CD8-positive, alpha-beta T cell (primary cell): ENCODE measurements at regions of chr19 and their contacts with region 1.

Region 1: GRCh38 chr19:43743022-43743421 is 11.7 kb downstream of the SMG9 start:
- DNase-seq: no peak
- ATAC-seq: no peak
- H3K4me3 ChIP-seq: no peak overlapping the region
- H3K4me3 Mint-ChIP-seq: no peak overlapping the region
- H3K27ac ChIP-seq: no peak overlapping the region
- H3K27ac Mint-ChIP-seq: no peak overlapping the region
- H3K4me1 ChIP-seq: no peaks in the 10 kb centered on the region
- H3K4me1 Mint-ChIP-seq: peaks cover 8% of the 10 kb centered on the region
- H3K27me3 ChIP-seq: no peaks in the 10 kb centered on the region
- H3K27me3 Mint-ChIP-seq: no peaks in the 10 kb centered on the region
- CTCF ChIP-seq: no peak

Region 2: GRCh38 chr19:43731846-43732245 is 11.2 kb before region 1 on chr19:
- CTCF ChIA-PET with region 1: interaction called, 10 read pairs
- POLR2A ChIA-PET with region 1: no interaction called
- intact Hi-C with region 1: no loop called
- DNase-seq: no peak
- ATAC-seq: no peak
- H3K4me3 ChIP-seq: no peak overlapping the region
- H3K4me3 Mint-ChIP-seq: no peak overlapping the region
- H3K27ac ChIP-seq: no peak overlapping the region
- H3K27ac Mint-ChIP-seq: no peak overlapping the region
- H3K4me1 ChIP-seq: no peaks in the 10 kb centered on the region
- H3K4me1 Mint-ChIP-seq: peaks cover 2% of the 10 kb centered on the region
- H3K27me3 ChIP-seq: no peaks in the 10 kb centered on the region
- H3K27me3 Mint-ChIP-seq: no peaks in the 10 kb centered on the region
- CTCF ChIP-seq: no peak

Region 3: GRCh38 chr19:43765109-43765876 is 22.3 kb after region 1 on chr19:
- CTCF ChIA-PET with region 1: interaction called, 9 read pairs
- POLR2A ChIA-PET with region 1: no interaction called
- intact Hi-C with region 1: loop called in 1 of 2 experiments (anchors 1 kb)
- DNase-seq: peak in 8 of 9 experiments; percentile 51 to 85 (median 72)
- ATAC-seq: peak; percentile 84
- H3K4me3 ChIP-seq: no peak overlapping the region
- H3K4me3 Mint-ChIP-seq: peak overlapping the region; percentile 58
- H3K27ac ChIP-seq: peak overlapping the region; percentile 24 to 77
- H3K27ac Mint-ChIP-seq: peak overlapping the region; percentile 90
- H3K4me1 ChIP-seq: peaks cover 30% of the 10 kb centered on the region
- H3K4me1 Mint-ChIP-seq: peaks cover 31% of the 10 kb centered on the region
- H3K27me3 ChIP-seq: no peaks in the 10 kb centered on the region
- H3K27me3 Mint-ChIP-seq: no peaks in the 10 kb centered on the region
- CTCF ChIP-seq: no peak

Region 4: DNA sequence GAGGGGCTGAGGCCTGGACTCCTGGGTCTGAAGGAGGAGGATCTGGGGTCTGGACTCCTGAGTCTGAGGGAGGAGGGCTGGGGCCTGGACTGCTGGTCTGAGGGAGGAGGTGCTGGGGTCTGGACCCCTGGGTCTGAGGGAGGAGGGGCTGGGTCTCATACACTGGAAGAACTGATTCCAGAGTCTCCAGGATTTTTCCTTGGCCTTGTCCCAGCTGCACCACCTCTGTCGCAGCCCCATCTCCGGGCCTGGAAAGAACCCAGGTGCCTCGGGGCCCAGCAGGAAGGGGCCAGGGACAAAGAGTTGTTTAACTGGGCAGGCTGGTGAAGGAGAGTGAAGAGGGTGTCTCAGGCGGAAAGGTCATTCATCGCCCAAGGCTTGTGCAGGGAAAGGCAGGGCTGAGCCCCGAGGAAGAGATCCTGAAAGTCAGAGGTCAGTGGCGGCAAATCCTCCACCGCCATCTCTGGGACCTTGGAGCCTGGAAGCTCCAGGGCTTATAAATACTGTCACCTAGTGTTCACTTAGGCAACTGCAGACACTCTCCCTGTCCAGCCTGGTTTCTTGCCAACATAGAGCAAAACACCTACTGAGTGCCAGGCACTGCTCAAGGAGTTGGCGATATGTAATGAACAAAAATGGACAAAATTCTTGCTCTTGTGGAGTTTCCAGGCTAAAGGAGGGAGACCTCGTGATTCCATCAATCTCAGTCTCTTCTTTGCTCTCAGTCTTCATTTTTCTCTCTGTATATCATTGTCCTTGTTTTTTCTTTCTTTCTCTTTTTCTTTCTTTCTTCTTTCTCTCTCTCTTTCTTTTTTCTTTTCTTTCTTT is 42.2 kb after region 1 on chr19:
- CTCF ChIA-PET with region 1: interaction called, 84 read pairs
- POLR2A ChIA-PET with region 1: interaction called, 5 read pairs
- intact Hi-C with region 1: loop called (anchors 1 kb)
- DNase-seq: peak in 8 of 9 experiments; percentile 27 to 82 (median 52)
- ATAC-seq: peak; percentile 38
- H3K4me3 ChIP-seq: no peak overlapping the region
- H3K4me3 Mint-ChIP-seq: peak overlapping the region; percentile 56
- H3K27ac ChIP-seq: peak overlapping the region; percentile 25 to 54
- H3K27ac Mint-ChIP-seq: peak overlapping the region; percentile 96
- H3K4me1 ChIP-seq: peaks cover 36% of the 10 kb centered on the region
- H3K4me1 Mint-ChIP-seq: peaks cover 40% of the 10 kb centered on the region
- H3K27me3 ChIP-seq: peaks cover 0 to 4% of the 10 kb centered on the region in 2 experiments
- H3K27me3 Mint-ChIP-seq: peaks cover 9% of the 10 kb centered on the region
- CTCF ChIP-seq: peak; percentile 94

Region 5: GRCh38 chr19:43809762-43810696 is 67.0 kb after region 1 on chr19:
- CTCF ChIA-PET with region 1: interaction called, 21 read pairs
- POLR2A ChIA-PET with region 1: no interaction called
- intact Hi-C with region 1: loop called (anchors 1 kb)
- DNase-seq: peak in 2 of 9 experiments; percentile 56 to 72
- ATAC-seq: peak; percentile 67
- H3K4me3 ChIP-seq: no peak overlapping the region
- H3K4me3 Mint-ChIP-seq: no peak overlapping the region
- H3K27ac ChIP-seq: no peak overlapping the region
- H3K27ac Mint-ChIP-seq: no peak overlapping the region
- H3K4me1 ChIP-seq: no peaks in the 10 kb centered on the region
- H3K4me1 Mint-ChIP-seq: no peaks in the 10 kb centered on the region
- H3K27me3 ChIP-seq: peaks cover 0 to 2% of the 10 kb centered on the region in 2 experiments
- H3K27me3 Mint-ChIP-seq: peaks cover 21% of the 10 kb centered on the region
- CTCF ChIP-seq: peak; percentile 70